ENCODE measurements at regions of chr2 and their contacts with region 1.

Region 1: GRCh38 chr2:38581193-38582147 is 21.3 kb downstream of the HNRNPLL start:
- DNase-seq: peak; percentile 52
- H3K4me3 Mint-ChIP-seq: no peak overlapping the region
- H3K27ac Mint-ChIP-seq: peak overlapping the region; percentile 13
- H3K4me1 Mint-ChIP-seq: peaks cover 9% of the 10 kb centered on the region
- H3K27me3 Mint-ChIP-seq: no peaks in the 10 kb centered on the region

Region 2: GRCh38 chr2:38565333-38565732 is 16.1 kb before region 1 on chr2:
- CTCF ChIA-PET with region 1: interaction called, 18 read pairs
- DNase-seq: no peak
- H3K4me3 Mint-ChIP-seq: no peak overlapping the region
- H3K27ac Mint-ChIP-seq: no peak overlapping the region
- H3K4me1 Mint-ChIP-seq: no peaks in the 10 kb centered on the region
- H3K27me3 Mint-ChIP-seq: no peaks in the 10 kb centered on the region

Region 3: GRCh38 chr2:38665854-38666555 is 84.5 kb after region 1 on chr2 and contains the start of gene GALM:
- CTCF ChIA-PET with region 1: interaction called, 14 read pairs
- DNase-seq: peak; percentile 72
- H3K4me3 Mint-ChIP-seq: peak within 1 kb of the TSS; percentile 73
- H3K27ac Mint-ChIP-seq: peak within 1 kb of the TSS; percentile 91
- H3K4me1 Mint-ChIP-seq: peaks cover 68% of the 10 kb centered on the region
- H3K27me3 Mint-ChIP-seq: no peaks in the 10 kb centered on the region

Region 4: DNA sequence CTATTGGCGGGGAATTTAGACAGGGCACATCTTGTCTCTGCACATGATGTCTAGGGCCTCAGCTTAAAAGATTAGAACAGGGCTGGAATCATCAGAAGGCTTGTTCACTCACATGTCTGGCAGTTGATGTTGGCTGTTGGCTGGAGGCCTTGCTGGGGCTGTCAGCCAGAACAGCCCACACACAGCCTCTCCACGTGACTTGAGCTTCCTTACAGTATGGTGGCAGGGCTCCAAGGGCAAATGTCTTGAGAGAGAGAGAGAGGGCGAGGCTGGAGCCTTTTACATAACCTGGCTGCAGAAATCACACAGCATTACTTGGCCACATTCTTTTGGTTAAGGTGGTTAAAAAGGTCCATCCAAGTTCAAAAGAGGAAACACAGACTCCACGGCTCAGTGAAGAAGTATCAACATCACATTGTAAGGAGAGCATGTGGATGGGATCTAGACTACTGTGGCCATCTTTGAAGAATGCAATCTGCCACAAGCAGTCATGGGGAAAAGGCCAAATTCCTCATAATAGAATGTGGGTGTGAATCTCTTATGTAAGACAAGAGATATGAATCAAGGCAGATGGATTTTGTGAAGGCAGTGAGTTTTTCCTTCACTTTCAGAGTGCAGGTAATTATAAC is 139.3 kb after region 1 on chr2:
- CTCF ChIA-PET with region 1: interaction called, 130 read pairs
- DNase-seq: no peak
- H3K4me3 Mint-ChIP-seq: no peak overlapping the region
- H3K27ac Mint-ChIP-seq: peak overlapping the region; percentile 45
- H3K4me1 Mint-ChIP-seq: peaks cover 40% of the 10 kb centered on the region
- H3K27me3 Mint-ChIP-seq: no peaks in the 10 kb centered on the region

Region 5: DNA sequence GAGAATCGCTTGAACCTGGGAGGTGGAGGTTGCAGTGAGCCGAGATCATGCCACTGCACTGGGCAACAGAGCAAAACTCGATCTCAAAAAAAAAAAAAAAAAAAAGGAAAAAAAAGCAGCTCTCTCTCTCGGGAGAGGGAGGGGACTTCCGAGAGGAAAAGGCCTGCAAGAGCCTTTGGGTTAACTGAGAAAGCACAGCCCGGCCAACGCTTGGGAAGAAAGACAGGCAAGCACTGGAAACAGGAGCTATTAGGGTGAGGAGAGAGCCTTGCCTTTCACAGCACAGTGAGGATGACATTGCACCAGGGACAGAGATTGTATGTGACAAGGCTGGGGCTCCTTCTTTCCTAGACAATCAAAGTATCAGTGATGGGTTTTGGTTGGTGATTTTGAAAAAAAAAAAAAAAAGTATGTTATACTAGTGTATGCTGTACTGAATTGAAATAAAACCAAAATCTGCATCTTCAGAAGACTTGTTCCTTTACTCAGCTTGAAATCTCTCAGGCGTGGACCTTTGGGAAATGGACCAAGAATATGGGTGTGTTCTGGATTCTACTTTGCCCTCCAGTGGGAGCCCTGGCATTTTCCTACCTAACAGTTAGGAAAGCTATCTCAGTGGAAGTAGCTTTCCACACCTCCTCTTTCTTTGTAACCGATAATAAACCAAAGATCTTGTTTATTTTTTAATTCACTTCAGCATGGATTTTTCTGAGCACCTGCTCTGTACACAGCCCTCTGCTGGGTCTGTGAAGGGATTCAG is 153.0 kb after region 1 on chr2:
- CTCF ChIA-PET with region 1: interaction called, 118 read pairs
- DNase-seq: peak; percentile 13
- H3K4me3 Mint-ChIP-seq: no peak overlapping the region
- H3K27ac Mint-ChIP-seq: peak overlapping the region; percentile 56
- H3K4me1 Mint-ChIP-seq: no peaks in the 10 kb centered on the region
- H3K27me3 Mint-ChIP-seq: no peaks in the 10 kb centered on the region